PC-9 (cell line): ENCODE measurements at regions of chr1 and their contacts with region 1.

Region 1: GRCh38 chr1:154431586-154432373 is 26.6 kb downstream of the IL6R start:
- DNase-seq: peak in 1 of 2 experiments; percentile 78
- H3K4me3 ChIP-seq: no peak overlapping the region
- H3K27ac ChIP-seq: peak overlapping the region; percentile 28; the same call in 1 of the 2 replicates
- H3K4me1 ChIP-seq: peaks cover 39% of the 10 kb centered on the region
- H3K27me3 ChIP-seq: no peaks in the 10 kb centered on the region
- CTCF ChIP-seq: no peak

Region 2: GRCh38 chr1:154115180-154115579 is 316.6 kb before region 1 on chr1:
- CTCF ChIA-PET with region 1: interaction called, 15 read pairs
- POLR2A ChIA-PET with region 1: no interaction called
- intact Hi-C with region 1: no loop called
- DNase-seq: no peak
- H3K4me3 ChIP-seq: no peak overlapping the region
- H3K27ac ChIP-seq: no peak overlapping the region
- H3K4me1 ChIP-seq: no peaks in the 10 kb centered on the region
- H3K27me3 ChIP-seq: no peaks in the 10 kb centered on the region
- CTCF ChIP-seq: no peak

Region 3: GRCh38 chr1:154352581-154353459 is 79.0 kb before region 1 on chr1:
- CTCF ChIA-PET with region 1: interaction called, 3 read pairs
- POLR2A ChIA-PET with region 1: no interaction called
- intact Hi-C with region 1: loop called (anchors 10 kb)
- DNase-seq: peak in 1 of 2 experiments; percentile 52
- H3K4me3 ChIP-seq: peak overlapping the region; percentile 27; the same call in 1 of the 2 replicates
- H3K27ac ChIP-seq: no peak overlapping the region
- H3K4me1 ChIP-seq: no peaks in the 10 kb centered on the region
- H3K27me3 ChIP-seq: peaks cover 45% of the 10 kb centered on the region
- CTCF ChIP-seq: no peak

Region 4: GRCh38 chr1:154419620-154420571 is 11.9 kb before region 1 on chr1:
- CTCF ChIA-PET with region 1: interaction called, 6 read pairs
- POLR2A ChIA-PET with region 1: interaction called, 3 read pairs
- intact Hi-C with region 1: loop called (anchors 1 kb)
- DNase-seq: peak; percentile 63 to 85
- H3K4me3 ChIP-seq: no peak overlapping the region
- H3K27ac ChIP-seq: peak overlapping the region; percentile 66
- H3K4me1 ChIP-seq: peaks cover 52% of the 10 kb centered on the region
- H3K27me3 ChIP-seq: no peaks in the 10 kb centered on the region
- CTCF ChIP-seq: no peak

Region 5: GRCh38 chr1:154466921-154467417 is 35.2 kb after region 1 on chr1:
- CTCF ChIA-PET with region 1: no interaction called
- POLR2A ChIA-PET with region 1: interaction called, 12 read pairs
- intact Hi-C with region 1: no loop called
- DNase-seq: no peak
- H3K4me3 ChIP-seq: no peak overlapping the region
- H3K27ac ChIP-seq: no peak overlapping the region
- H3K4me1 ChIP-seq: peaks cover 14% of the 10 kb centered on the region
- H3K27me3 ChIP-seq: no peaks in the 10 kb centered on the region
- CTCF ChIP-seq: no peak